Activated naive CD4-positive, alpha-beta T cell treated with anti-CD3 and anti-CD28 coated beads for 36 hours (primary cell): ENCODE measurements at regions of chr6 and their contacts with region 1.

Region 1: DNA sequence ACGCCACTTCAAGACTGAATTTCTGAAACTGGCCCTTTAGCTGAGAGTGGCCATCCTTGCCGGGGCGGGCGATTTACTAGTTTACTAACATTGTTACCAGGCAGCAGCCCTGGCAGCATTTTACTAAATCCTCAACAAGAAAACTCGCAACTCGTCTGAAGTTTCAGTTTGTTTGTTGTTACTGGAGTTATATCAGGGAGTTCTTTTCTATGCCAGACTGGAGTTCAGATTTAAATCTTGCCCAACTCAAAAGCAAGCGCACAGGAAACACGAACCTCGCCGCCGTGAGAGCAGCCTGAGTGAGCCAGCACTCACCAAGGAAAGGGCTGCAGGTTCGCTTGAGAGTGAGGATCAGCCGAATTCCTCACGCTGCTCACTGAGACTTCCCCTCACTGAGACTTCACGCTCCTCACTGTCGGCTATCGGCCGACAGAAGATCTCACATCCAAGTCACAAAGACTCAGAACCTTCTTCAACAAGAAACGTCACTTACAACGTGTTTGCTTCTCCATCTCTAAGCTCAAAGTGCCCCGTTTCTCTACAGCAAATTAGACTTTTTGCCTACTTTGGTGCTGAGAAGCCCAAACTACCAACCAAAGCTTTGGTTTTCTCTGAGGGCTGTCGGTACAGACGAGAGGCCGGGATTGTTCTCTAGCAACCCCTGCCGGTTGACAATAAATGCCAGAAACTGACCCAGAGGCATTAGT is 78.9 kb downstream of the OLIG3 start:
- DNase-seq: peak; percentile 80
- H3K4me3 Mint-ChIP-seq: peak overlapping the region; percentile 65
- H3K27ac Mint-ChIP-seq: no peak overlapping the region
- H3K4me1 Mint-ChIP-seq: peaks cover 11% of the 10 kb centered on the region
- H3K27me3 Mint-ChIP-seq: no peaks in the 10 kb centered on the region

Region 2: GRCh38 chr6:136067731-136068341 is 1347.4 kb before region 1 on chr6:
- CTCF ChIA-PET with region 1: no interaction called
- intact Hi-C with region 1: no loop called
- DNase-seq: no peak
- H3K4me3 Mint-ChIP-seq: no peak overlapping the region
- H3K27ac Mint-ChIP-seq: no peak overlapping the region
- H3K4me1 Mint-ChIP-seq: no peaks in the 10 kb centered on the region
- H3K27me3 Mint-ChIP-seq: no peaks in the 10 kb centered on the region

Region 3: DNA sequence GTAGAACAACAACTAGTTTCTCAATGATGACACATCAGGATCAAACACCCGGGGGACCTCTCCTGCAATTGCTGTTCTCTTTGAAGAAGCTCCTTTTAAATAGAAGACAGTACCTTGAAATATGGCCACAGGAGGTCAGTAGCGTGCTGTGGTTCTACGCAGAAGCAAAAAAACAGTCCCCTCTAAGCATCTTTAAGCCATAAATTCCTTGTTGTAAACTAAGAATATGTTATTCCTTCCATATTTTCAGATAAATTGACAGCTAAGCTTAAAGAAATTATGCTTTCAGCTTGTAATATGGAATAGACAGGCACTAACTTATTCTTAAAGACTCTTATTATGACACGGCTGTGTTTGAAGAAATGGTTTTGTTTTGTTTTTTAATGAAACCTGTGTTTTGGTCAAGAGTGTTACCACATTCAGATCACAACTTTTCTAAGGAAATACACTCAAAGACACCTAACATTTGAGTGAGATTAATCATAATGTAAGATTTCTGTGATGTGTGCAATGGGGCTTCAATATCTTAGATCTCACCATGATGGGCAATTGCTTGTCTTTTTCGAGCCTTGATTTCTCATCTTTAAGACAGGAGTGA is 320.8 kb before region 1 on chr6:
- CTCF ChIA-PET with region 1: interaction called, 3 read pairs
- intact Hi-C with region 1: loop called (anchors 1 kb)
- DNase-seq: peak; percentile 75
- H3K4me3 Mint-ChIP-seq: no peak overlapping the region
- H3K27ac Mint-ChIP-seq: no peak overlapping the region
- H3K4me1 Mint-ChIP-seq: peaks cover 13% of the 10 kb centered on the region
- H3K27me3 Mint-ChIP-seq: peaks cover 3% of the 10 kb centered on the region

Region 4: GRCh38 chr6:137271245-137272183 is 143.8 kb before region 1 on chr6:
- CTCF ChIA-PET with region 1: interaction called, 5 read pairs
- intact Hi-C with region 1: loop called (anchors 1 kb)
- DNase-seq: no peak
- H3K4me3 Mint-ChIP-seq: no peak overlapping the region
- H3K27ac Mint-ChIP-seq: no peak overlapping the region
- H3K4me1 Mint-ChIP-seq: no peaks in the 10 kb centered on the region
- H3K27me3 Mint-ChIP-seq: peaks cover 9% of the 10 kb centered on the region

Region 5: GRCh38 chr6:137363805-137364138 is 51.5 kb before region 1 on chr6:
- CTCF ChIA-PET with region 1: no interaction called
- intact Hi-C with region 1: loop called (anchors 1 kb)
- DNase-seq: no peak
- H3K4me3 Mint-ChIP-seq: no peak overlapping the region
- H3K27ac Mint-ChIP-seq: no peak overlapping the region
- H3K4me1 Mint-ChIP-seq: peaks cover 19% of the 10 kb centered on the region
- H3K27me3 Mint-ChIP-seq: no peaks in the 10 kb centered on the region